SK-N-SH (cell line): ENCODE measurements at regions of chr7 and their contacts with region 1.

Region 1: GRCh38 chr7:123208793-123209192 is 9.0 kb upstream of the SLC13A1 start:
- DNase-seq: peak; percentile 7
- H3K4me3 ChIP-seq: no peak overlapping the region
- H3K27ac ChIP-seq: no peak overlapping the region
- H3K4me1 ChIP-seq: no peaks in the 10 kb centered on the region
- H3K27me3 ChIP-seq: no peaks in the 10 kb centered on the region
- CTCF ChIP-seq: peak; percentile 42
- EP300 ChIP-seq: no peak
- RAD21 ChIP-seq: peak; percentile 67

Region 2: DNA sequence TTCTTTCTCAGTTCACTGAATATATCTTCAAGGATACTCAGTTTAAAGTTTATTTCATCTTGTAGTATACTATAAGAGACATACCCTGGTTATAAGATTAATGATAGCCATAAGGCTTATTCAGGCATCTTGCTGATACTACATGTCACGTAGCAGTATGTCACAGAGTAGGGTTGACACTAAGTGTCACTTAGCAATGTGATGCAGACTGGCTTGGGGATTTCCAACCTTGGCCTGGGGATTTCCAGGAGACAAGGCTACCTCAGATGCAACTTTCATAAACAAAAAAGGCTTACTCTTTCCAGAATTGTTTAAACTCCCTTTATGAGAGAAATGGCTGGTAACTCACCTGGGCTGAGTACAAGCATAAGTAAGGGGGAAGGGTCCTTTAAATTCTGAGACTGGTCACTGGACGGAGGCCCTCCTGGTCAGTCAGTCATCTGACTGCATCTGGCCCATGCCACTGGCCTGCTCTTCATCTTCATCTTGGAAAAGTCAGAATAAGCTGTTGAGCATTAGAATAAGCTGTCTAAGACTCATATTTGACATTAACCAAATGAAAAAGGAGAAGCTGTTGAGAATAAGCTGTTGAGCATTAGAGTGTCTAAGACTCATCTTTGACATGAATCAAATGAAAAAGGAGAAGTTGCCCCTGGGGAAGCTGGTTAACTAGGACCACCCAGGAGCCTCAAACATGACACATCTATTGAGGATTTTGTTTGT is 18.5 kb before region 1 on chr7:
- CTCF ChIA-PET with region 1: interaction called, 14 read pairs
- POLR2A ChIA-PET with region 1: no interaction called
- DNase-seq: no peak
- H3K4me3 ChIP-seq: no peak overlapping the region
- H3K27ac ChIP-seq: no peak overlapping the region
- H3K4me1 ChIP-seq: no peaks in the 10 kb centered on the region
- H3K27me3 ChIP-seq: no peaks in the 10 kb centered on the region
- CTCF ChIP-seq: no peak
- EP300 ChIP-seq: no peak
- RAD21 ChIP-seq: no peak

Region 3: GRCh38 chr7:123220396-123220795 is 11.6 kb after region 1 on chr7:
- CTCF ChIA-PET with region 1: interaction called, 16 read pairs
- POLR2A ChIA-PET with region 1: no interaction called
- DNase-seq: no peak
- H3K4me3 ChIP-seq: no peak overlapping the region
- H3K27ac ChIP-seq: no peak overlapping the region
- H3K4me1 ChIP-seq: no peaks in the 10 kb centered on the region
- H3K27me3 ChIP-seq: no peaks in the 10 kb centered on the region
- CTCF ChIP-seq: no peak
- EP300 ChIP-seq: no peak
- RAD21 ChIP-seq: no peak

Region 4: GRCh38 chr7:123355576-123356195 is 146.9 kb after region 1 on chr7:
- CTCF ChIA-PET with region 1: interaction called, 25 read pairs
- POLR2A ChIA-PET with region 1: no interaction called
- DNase-seq: no peak
- H3K4me3 ChIP-seq: no peak overlapping the region
- H3K27ac ChIP-seq: no peak overlapping the region
- H3K4me1 ChIP-seq: peaks cover 0 to 24% of the 10 kb centered on the region in 2 experiments; a peak in 2 of 4 replicates
- H3K27me3 ChIP-seq: no peaks in the 10 kb centered on the region
- CTCF ChIP-seq: peak; percentile 11; the same call in 1 of the 2 replicates
- EP300 ChIP-seq: no peak
- RAD21 ChIP-seq: no peak